Activated CD8-positive, alpha-beta T cell treated with anti-CD3 and anti-CD28 coated beads, Interleukin-2, amount 10 ng/mL, durations not matched to agents 7 days and 5 days (primary cell): ENCODE measurements at regions of chr11 and their contacts with region 1.

Region 1: DNA sequence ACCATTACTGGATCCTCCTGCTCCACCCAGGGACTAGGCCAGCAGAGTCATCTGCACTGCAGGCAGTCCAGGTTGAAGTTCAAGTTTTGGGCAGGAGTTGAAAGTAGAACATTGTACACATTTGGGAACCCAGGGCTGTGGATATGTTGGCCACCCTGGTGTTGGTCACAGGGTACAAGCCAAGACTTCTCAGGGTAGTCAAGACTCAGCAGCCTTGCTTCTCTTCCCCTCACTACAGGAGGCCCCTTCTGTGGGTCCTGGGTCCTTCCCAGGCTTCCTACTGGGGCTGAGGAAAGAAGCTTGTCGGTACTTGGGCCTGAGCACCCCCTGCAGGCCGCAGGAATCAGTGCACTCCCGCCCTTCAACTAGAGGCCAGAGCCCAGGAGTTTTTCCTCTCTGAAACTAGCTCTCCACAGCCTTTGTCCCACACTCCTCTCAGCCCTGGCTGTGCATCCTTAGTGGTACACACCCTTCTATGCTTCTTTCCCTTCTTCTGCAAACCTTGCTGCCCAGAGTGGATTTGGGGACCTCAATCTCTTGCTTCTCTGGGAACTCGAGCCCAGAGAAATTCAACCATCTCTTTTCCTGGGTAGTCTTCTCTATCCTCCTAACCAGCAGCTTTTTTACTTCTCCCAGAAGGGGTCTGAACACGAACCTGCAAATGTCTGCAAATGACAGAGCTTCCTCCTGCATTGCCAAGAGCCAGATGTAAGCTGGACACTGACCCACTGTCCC is 2.6 kb upstream of the HPX start:
- DNase-seq: peak; percentile 69
- ATAC-seq: peak; percentile 89
- H3K4me3 Mint-ChIP-seq: no peak overlapping the region
- H3K27ac Mint-ChIP-seq: no peak overlapping the region
- H3K4me1 Mint-ChIP-seq: no peaks in the 10 kb centered on the region
- H3K27me3 Mint-ChIP-seq: peaks cover 12% of the 10 kb centered on the region

Region 2: GRCh38 chr11:6345366-6345765 is 98.1 kb before region 1 on chr11:
- CTCF ChIA-PET with region 1: no interaction called
- POLR2A ChIA-PET with region 1: no interaction called
- DNase-seq: no peak
- ATAC-seq: no peak
- H3K4me3 Mint-ChIP-seq: no peak overlapping the region
- H3K27ac Mint-ChIP-seq: no peak overlapping the region
- H3K4me1 Mint-ChIP-seq: no peaks in the 10 kb centered on the region
- H3K27me3 Mint-ChIP-seq: peaks cover 6% of the 10 kb centered on the region

Region 3: GRCh38 chr11:6362873-6363678 is 80.4 kb before region 1 on chr11:
- CTCF ChIA-PET with region 1: interaction called, 18 read pairs
- POLR2A ChIA-PET with region 1: no interaction called
- DNase-seq: peak; percentile 81
- ATAC-seq: peak; percentile 96
- H3K4me3 Mint-ChIP-seq: no peak overlapping the region
- H3K27ac Mint-ChIP-seq: no peak overlapping the region
- H3K4me1 Mint-ChIP-seq: no peaks in the 10 kb centered on the region
- H3K27me3 Mint-ChIP-seq: peaks cover 2% of the 10 kb centered on the region

Region 4: DNA sequence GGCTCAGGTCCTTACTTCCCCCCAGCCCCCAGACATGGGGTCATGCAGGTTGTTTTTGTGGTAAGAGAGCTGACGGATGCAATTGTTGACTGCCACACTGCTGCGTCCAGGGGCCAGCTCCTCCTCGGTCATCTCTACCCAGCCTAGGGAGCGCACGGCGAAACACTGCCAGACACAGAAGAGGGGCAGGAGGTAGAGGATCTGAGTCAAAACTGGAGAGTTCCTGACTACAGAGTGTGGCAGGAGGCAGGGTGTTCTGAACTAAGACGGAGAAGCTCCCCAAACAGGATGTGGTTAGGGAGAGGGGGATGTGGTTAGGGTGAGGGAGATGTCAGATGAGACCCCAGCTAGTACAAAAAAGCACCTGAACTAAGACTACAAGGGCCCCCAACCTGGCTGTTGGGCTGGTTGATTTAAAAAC is 40.9 kb before region 1 on chr11:
- CTCF ChIA-PET with region 1: interaction called, 34 read pairs
- POLR2A ChIA-PET with region 1: no interaction called
- DNase-seq: peak; percentile 95
- ATAC-seq: peak; percentile 93
- H3K4me3 Mint-ChIP-seq: peak overlapping the region; percentile 81
- H3K27ac Mint-ChIP-seq: peak overlapping the region; percentile 98
- H3K4me1 Mint-ChIP-seq: peaks cover 66% of the 10 kb centered on the region
- H3K27me3 Mint-ChIP-seq: no peaks in the 10 kb centered on the region

Region 5: GRCh38 chr11:6431861-6432260 is 11.6 kb before region 1 on chr11:
- CTCF ChIA-PET with region 1: interaction called, 15 read pairs
- POLR2A ChIA-PET with region 1: no interaction called
- DNase-seq: no peak
- ATAC-seq: no peak
- H3K4me3 Mint-ChIP-seq: no peak overlapping the region
- H3K27ac Mint-ChIP-seq: no peak overlapping the region
- H3K4me1 Mint-ChIP-seq: peaks cover 6% of the 10 kb centered on the region
- H3K27me3 Mint-ChIP-seq: peaks cover 15% of the 10 kb centered on the region

Region 6: DNA sequence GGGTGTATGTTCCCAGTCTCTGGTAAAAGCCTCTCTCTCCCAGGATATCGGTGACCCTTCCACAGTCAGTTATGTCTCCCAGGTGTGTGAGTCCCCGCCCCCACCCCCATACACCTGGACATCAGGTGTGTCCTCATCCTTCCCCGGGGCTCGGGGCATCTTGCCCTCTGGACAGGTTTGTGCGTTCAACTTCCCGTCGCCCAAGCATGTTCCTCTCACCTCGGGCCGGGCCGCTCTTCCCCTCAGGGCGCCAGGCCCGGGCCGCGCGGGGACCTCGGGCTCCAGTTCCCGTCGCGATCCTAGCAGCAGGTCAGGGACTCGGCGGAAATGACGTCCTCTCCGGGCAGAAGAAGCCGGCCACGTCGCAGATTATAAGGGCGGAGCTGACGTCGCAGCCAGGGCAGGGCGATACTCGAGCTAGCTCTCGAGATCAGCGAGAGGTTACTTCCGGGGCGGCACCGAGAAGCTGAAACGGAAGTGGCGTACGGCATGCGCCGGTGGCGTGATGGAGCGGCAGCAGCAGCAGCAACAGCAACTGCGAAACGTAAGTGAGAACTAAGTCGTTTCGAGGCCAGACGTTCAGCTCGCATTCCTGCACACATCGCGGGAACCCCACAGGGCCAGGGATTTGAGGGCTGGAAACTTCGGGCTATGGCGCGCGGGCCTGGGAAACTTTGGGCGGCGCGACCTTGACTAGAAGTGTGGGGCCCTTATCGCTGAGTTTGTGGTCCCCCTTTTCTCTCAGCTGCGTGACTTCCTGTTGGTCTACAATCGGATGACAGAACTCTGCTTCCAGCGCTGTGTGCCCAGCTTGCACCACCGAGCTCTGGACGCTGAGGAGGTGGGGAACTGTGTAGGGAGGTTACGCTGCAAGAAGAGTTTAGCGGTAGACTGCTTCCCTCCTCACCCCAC is 37.8 kb after region 1 on chr11 and contains the starts of genes ARFIP2 and TIMM10B:
- CTCF ChIA-PET with region 1: interaction called, 12 read pairs
- POLR2A ChIA-PET with region 1: no interaction called
- DNase-seq: peak; percentile 99
- ATAC-seq: peak; percentile 96
- H3K4me3 Mint-ChIP-seq: peak within 1 kb of the TSS; percentile 94
- H3K27ac Mint-ChIP-seq: peak within 1 kb of the TSS; percentile 97
- H3K4me1 Mint-ChIP-seq: peaks cover 38% of the 10 kb centered on the region
- H3K27me3 Mint-ChIP-seq: no peaks in the 10 kb centered on the region
- total RNA-seq, gene ARFIP2: 38.6 to 39.8 TPM
- total RNA-seq, gene TIMM10B: 34.1 to 35.4 TPM

Region 7: DNA sequence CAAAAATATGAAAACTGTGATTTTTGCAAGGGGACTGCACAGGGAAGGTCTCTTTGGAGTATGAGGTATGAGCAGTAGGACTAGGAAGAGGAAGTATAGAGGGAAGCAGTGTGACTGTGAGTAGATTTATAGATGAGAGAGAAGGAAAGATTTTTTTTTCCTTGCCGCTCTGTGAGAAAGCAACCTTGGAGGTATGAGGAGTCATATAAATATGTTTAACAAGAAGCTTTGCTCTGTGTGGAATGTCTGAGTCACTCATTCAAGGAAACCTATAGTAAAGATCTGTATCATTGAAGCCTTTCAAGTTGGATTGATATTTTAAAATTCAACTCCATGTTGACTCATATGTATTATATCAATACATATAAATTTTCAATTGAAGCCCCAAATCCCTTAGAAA is 79.8 kb after region 1 on chr11:
- CTCF ChIA-PET with region 1: interaction called, 10 read pairs
- POLR2A ChIA-PET with region 1: no interaction called
- DNase-seq: no peak
- ATAC-seq: no peak
- H3K4me3 Mint-ChIP-seq: no peak overlapping the region
- H3K27ac Mint-ChIP-seq: no peak overlapping the region
- H3K4me1 Mint-ChIP-seq: peaks cover 39% of the 10 kb centered on the region
- H3K27me3 Mint-ChIP-seq: no peaks in the 10 kb centered on the region